Prostate gland (tissue), 2 donors: ENCODE measurements at regions of chr2 and their contacts with region 1.

Region 1: GRCh38 chr2:127106951-127107621 is at the start of gene BIN1:
- DNase-seq: peak; percentile 86
- H3K4me3 ChIP-seq: peak within 1 kb of the TSS; percentile 66 to 90
- H3K27ac ChIP-seq: peak within 1 kb of the TSS; percentile 85 to 90
- H3K4me1 ChIP-seq: no peaks in the 10 kb centered on the region
- H3K27me3 ChIP-seq: no peaks in the 10 kb centered on the region
- CTCF ChIP-seq: peak in 1 of 4 experiments; percentile 18
- POLR2A ChIP-seq: peak; percentile 70
- total RNA-seq, gene BIN1: 65.6 to 70.1 TPM

Region 2: GRCh38 chr2:127064642-127065250 is 42.3 kb before region 1 on chr2:
- intact Hi-C with region 1: loop called (anchors 2 kb)
- DNase-seq: peak; percentile 54
- H3K4me3 ChIP-seq: no peak overlapping the region
- H3K27ac ChIP-seq: peak overlapping the region; percentile 53 to 69
- H3K4me1 ChIP-seq: peaks cover 10% of the 10 kb centered on the region
- H3K27me3 ChIP-seq: no peaks in the 10 kb centered on the region
- CTCF ChIP-seq: peak in 1 of 4 experiments; percentile 28
- POLR2A ChIP-seq: no peak

Region 3: GRCh38 chr2:127174136-127174535 is 67.0 kb after region 1 on chr2:
- intact Hi-C with region 1: loop called (anchors 5 kb)
- DNase-seq: no peak
- H3K4me3 ChIP-seq: no peak overlapping the region
- H3K27ac ChIP-seq: peak overlapping the region in 1 of 2 donors; percentile 71
- H3K4me1 ChIP-seq: no peaks in the 10 kb centered on the region
- H3K27me3 ChIP-seq: no peaks in the 10 kb centered on the region
- CTCF ChIP-seq: no peak
- POLR2A ChIP-seq: no peak

Region 4: DNA sequence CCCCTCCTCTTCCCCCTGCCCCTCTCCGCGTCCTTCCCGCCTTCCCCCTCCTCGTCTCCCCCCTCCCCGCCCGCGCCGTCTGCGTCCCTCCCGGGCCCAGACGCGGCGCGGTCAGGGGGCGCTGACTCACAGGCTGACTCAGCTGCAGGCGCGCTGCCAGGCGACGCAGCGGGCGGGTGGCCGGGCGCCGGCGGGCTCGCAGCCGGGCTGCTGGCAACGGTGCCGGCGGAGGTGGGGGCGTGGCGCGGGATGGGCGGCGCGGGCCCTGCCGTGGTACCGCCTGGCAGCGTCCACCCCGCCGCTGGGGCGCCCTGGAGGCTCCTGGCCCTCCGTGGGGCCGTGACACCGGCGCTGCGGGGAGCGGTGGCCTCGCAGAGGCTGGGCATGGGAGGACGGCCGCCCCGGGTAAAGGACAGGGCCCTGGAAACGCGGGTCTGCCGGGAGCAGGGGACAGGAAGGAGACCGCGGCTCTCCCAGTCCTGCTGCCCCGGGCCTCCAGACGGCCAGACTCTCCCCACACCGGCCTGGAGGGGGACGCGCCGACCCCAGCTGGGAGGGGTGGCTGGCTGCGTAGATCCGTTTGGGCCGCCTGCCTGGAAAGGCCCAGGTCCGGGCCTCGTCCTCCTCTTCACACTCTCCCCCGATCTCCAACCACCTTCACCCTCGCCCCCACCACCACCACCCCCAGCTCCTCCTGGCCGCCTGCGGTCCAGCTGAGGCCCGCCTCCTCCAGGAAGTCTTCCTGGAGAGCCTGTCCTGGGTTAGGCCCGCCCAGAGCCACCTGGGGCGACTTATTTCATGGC is 301.1 kb after region 1 on chr2:
- intact Hi-C with region 1: loop called (anchors 10 kb)
- DNase-seq: peak; percentile 85
- H3K4me3 ChIP-seq: peak overlapping the region; percentile 43 to 47
- H3K27ac ChIP-seq: peak overlapping the region; percentile 87 to 88
- H3K4me1 ChIP-seq: no peaks in the 10 kb centered on the region
- H3K27me3 ChIP-seq: no peaks in the 10 kb centered on the region
- CTCF ChIP-seq: peak in 2 of 4 experiments; percentile 9 to 39
- POLR2A ChIP-seq: peak; percentile 60